Psoas muscle (tissue), 8 donors: ENCODE measurements at regions of chr12 and their contacts with region 1.

Region 1: GRCh38 chr12:91991399-91992187 is 154.1 kb downstream of the BTG1 start:
- DNase-seq: no peak
- ATAC-seq: no peak
- H3K4me3 ChIP-seq: no peak overlapping the region
- H3K27ac ChIP-seq: no peak overlapping the region
- H3K4me1 ChIP-seq: no peaks in the 10 kb centered on the region
- H3K27me3 ChIP-seq: no peaks in the 10 kb centered on the region
- CTCF ChIP-seq: no peak

Region 2: GRCh38 chr12:92059976-92060375 is 68.4 kb after region 1 on chr12:
- intact Hi-C with region 1: loop called in 1 of 2 experiments (anchors 10 kb)
- DNase-seq: no peak
- ATAC-seq: no peak
- H3K4me3 ChIP-seq: no peak overlapping the region
- H3K27ac ChIP-seq: no peak overlapping the region
- H3K4me1 ChIP-seq: no peaks in the 10 kb centered on the region
- H3K27me3 ChIP-seq: no peaks in the 10 kb centered on the region
- CTCF ChIP-seq: no peak